Esophagus muscularis mucosa (tissue), 4 donors: ENCODE measurements at regions of chr6 and their contacts with region 1.

Region 1: GRCh38 chr6:123802697-123803496 is 768 bp upstream of the NKAIN2 start:
- DNase-seq: peak; percentile 93
- H3K4me3 ChIP-seq: peak overlapping the region; percentile 55 to 63 (median 60)
- H3K27ac ChIP-seq: no peak overlapping the region
- H3K4me1 ChIP-seq: peaks cover 5 to 21% (median 19%) of the 10 kb centered on the region in 4 donors
- H3K27me3 ChIP-seq: peaks cover 0 to 16% (median 7%) of the 10 kb centered on the region in 4 donors
- CTCF ChIP-seq: peak; percentile 73 to 96 (median 86)
- EP300 ChIP-seq: no peak
- POLR2A ChIP-seq: no peak

Region 2: DNA sequence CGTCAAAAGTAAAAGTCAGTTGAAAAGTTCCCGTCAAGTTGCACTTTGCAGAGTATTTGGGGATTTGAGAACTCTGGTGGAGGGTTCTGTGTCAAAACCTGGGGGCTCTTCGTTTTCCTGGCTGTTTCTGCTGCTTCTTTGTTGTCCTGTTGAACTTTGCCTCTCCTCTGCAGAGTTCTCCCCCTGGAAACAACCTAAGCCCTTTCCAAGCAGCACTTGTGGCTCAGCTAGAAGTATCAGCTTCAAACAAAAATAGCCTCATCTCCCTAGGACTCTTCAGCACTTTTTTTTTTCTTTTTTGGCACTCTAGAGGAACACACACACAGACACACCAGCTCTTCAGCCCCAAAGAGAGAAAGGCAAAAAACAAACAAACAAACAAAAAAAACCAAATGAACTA is 166.1 kb before region 1 on chr6 and contains the start of gene TRDN:
- intact Hi-C with region 1: no loop called
- DNase-seq: no peak
- H3K4me3 ChIP-seq: no peak within 1 kb of the TSS
- H3K27ac ChIP-seq: no peak within 1 kb of the TSS
- H3K4me1 ChIP-seq: no peaks in the 10 kb centered on the region
- H3K27me3 ChIP-seq: no peaks in the 10 kb centered on the region
- CTCF ChIP-seq: no peak
- EP300 ChIP-seq: no peak
- POLR2A ChIP-seq: no peak
- total RNA-seq, gene TRDN: not detected

Region 3: GRCh38 chr6:123841067-123841896 is 38.4 kb after region 1 on chr6:
- intact Hi-C with region 1: no loop called
- DNase-seq: no peak
- H3K4me3 ChIP-seq: no peak overlapping the region
- H3K27ac ChIP-seq: no peak overlapping the region
- H3K4me1 ChIP-seq: no peaks in the 10 kb centered on the region
- H3K27me3 ChIP-seq: no peaks in the 10 kb centered on the region
- CTCF ChIP-seq: no peak
- EP300 ChIP-seq: no peak
- POLR2A ChIP-seq: no peak

Region 4: GRCh38 chr6:123909989-123910388 is 107.1 kb after region 1 on chr6:
- intact Hi-C with region 1: no loop called
- DNase-seq: no peak
- H3K4me3 ChIP-seq: no peak overlapping the region
- H3K27ac ChIP-seq: no peak overlapping the region
- H3K4me1 ChIP-seq: no peaks in the 10 kb centered on the region
- H3K27me3 ChIP-seq: no peaks in the 10 kb centered on the region
- CTCF ChIP-seq: no peak
- EP300 ChIP-seq: no peak
- POLR2A ChIP-seq: no peak

Region 5: DNA sequence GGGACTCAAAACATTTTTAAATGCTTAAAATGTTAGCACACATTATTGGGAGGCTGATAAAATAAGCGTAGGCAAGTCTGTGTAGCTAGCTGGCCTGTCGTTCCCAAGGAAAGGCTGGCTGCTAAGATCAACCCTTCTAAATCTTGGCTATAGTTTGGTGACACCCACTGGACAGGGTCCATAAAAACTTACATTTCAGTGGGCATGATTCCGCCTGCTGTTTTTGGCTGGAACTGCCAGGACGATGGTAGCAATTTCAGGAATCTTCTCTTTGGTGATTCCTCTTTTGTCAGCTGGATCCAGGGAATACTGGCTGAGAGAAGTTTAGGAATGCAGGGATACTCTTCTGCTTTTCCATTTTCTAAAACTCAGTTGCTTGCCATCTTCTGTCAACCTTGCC is 163.0 kb after region 1 on chr6:
- intact Hi-C with region 1: loop called (anchors 5 kb)
- DNase-seq: no peak
- H3K4me3 ChIP-seq: no peak overlapping the region
- H3K27ac ChIP-seq: no peak overlapping the region
- H3K4me1 ChIP-seq: peaks cover 0 to 8% (median 3%) of the 10 kb centered on the region in 4 donors
- H3K27me3 ChIP-seq: no peaks in the 10 kb centered on the region
- CTCF ChIP-seq: peak in 1 of 3 experiments; percentile 26
- EP300 ChIP-seq: no peak
- POLR2A ChIP-seq: no peak

Region 6: GRCh38 chr6:124854338-124854922 is 1051.5 kb after region 1 on chr6:
- intact Hi-C with region 1: loop called (anchors 10 kb)
- DNase-seq: no peak
- H3K4me3 ChIP-seq: no peak overlapping the region
- H3K27ac ChIP-seq: no peak overlapping the region
- H3K4me1 ChIP-seq: no peaks in the 10 kb centered on the region
- H3K27me3 ChIP-seq: no peaks in the 10 kb centered on the region
- CTCF ChIP-seq: peak in 2 of 3 experiments; percentile 22 to 27
- EP300 ChIP-seq: no peak
- POLR2A ChIP-seq: no peak